ENCODE measurements at regions of chr1 and their contacts with region 1.

Region 1: GRCh38 chr1:113963281-113963906 is 15.9 kb upstream of the OLFML3 start:
- ATAC-seq: no peak
- H3K4me3 ChIP-seq: no peak overlapping the region
- H3K27ac ChIP-seq: no peak overlapping the region
- H3K4me1 ChIP-seq: no peaks in the 10 kb centered on the region

Region 2: DNA sequence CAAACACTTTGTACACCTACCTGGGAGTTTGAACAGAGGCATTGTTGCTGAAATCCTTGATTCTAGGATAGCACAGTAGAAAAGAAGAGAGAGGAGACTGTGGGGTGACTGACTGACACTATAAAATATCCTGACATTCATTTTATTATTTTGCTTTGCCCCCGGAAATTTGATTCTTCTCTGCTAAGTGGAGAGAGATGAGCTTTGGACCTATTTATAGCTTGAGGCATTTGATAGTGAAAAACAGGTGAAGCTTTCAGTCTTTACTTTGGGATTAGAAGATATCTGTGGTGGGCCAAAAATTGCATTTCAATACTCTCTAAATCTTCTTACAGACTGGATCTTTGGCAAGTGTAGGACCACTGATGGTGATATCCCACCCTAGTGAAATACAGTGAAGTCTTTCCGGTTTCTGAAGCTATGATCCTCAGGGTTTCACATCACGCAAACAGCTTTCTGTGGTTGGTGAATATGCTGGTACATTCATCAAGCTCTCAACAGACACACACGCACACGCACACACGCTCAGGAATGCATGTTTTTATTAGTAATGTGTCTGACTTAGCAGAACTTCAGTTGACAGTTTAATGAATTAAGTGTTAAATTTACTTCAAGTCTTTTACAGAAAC is 732.1 kb after region 1 on chr1 and contains the start of gene AMPD1:
- in situ Hi-C with region 1: loop called in 1 of 9 experiments (anchors 25 kb)
- ATAC-seq: peak in 2 of 8 experiments; percentile 13 to 65
- H3K4me3 ChIP-seq: no peak within 1 kb of the TSS
- H3K27ac ChIP-seq: no peak within 1 kb of the TSS
- H3K4me1 ChIP-seq: no peaks in the 10 kb centered on the region
- total RNA-seq, gene AMPD1: 0.08 to 0.28 TPM in 2 of 8 experiments, not detected in the others